ENCODE measurements at regions of chr1 and their contacts with region 1.

Region 1: DNA sequence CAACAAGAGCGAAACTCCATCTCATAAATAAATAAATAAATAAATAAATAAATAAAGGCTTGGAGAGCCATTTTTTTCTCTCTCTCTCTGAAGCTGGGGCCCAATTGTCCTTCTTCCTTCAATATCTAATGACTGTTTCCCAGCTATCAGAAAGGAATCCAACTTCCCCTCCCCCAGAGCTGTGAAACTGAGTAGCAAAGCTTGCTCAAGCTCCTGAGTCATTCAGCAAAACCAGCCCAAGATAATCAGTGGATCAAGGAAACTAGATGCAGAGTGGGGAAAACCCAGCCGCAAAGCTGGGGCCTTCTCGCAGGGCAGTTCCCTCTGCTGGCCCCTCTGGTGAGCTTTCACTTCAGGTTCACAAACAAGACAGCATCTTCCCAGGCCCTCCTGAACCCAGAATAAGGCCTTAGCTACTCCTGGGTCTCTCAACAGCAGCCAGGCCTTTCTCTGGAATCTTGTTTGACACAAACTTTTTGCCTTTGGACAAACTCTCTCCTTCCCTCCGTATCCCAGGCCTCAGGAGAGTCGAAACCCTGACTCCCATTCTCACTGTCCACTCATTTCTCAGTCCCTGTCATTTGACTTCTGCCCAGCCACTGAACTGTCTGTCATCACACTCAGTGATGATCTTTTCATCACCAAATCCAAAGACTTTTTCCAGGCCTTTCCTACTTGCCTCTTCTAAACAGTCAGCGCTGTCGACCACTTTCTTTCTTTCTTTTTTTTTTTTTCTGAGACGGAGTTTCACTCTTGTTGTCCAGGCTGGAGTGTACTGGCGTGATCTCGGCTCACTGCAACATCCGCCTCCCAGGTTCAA is 18.0 kb upstream of the PTP4A2 start:
- DNase-seq: peak; percentile 87 to 91
- ATAC-seq: peak; percentile 89
- H3K4me3 ChIP-seq: no peak overlapping the region
- H3K27ac ChIP-seq: peak overlapping the region; percentile 85 to 93
- H3K4me1 ChIP-seq: peaks cover 2 to 5% of the 10 kb centered on the region in 2 donors
- H3K27me3 ChIP-seq: no peaks in the 10 kb centered on the region

Region 2: GRCh38 chr1:31605908-31606427 is 350.2 kb before region 1 on chr1:
- intact Hi-C with region 1: no loop called
- DNase-seq: no peak
- ATAC-seq: no peak
- H3K4me3 ChIP-seq: no peak overlapping the region
- H3K27ac ChIP-seq: no peak overlapping the region
- H3K4me1 ChIP-seq: no peaks in the 10 kb centered on the region
- H3K27me3 ChIP-seq: no peaks in the 10 kb centered on the region

Region 3: DNA sequence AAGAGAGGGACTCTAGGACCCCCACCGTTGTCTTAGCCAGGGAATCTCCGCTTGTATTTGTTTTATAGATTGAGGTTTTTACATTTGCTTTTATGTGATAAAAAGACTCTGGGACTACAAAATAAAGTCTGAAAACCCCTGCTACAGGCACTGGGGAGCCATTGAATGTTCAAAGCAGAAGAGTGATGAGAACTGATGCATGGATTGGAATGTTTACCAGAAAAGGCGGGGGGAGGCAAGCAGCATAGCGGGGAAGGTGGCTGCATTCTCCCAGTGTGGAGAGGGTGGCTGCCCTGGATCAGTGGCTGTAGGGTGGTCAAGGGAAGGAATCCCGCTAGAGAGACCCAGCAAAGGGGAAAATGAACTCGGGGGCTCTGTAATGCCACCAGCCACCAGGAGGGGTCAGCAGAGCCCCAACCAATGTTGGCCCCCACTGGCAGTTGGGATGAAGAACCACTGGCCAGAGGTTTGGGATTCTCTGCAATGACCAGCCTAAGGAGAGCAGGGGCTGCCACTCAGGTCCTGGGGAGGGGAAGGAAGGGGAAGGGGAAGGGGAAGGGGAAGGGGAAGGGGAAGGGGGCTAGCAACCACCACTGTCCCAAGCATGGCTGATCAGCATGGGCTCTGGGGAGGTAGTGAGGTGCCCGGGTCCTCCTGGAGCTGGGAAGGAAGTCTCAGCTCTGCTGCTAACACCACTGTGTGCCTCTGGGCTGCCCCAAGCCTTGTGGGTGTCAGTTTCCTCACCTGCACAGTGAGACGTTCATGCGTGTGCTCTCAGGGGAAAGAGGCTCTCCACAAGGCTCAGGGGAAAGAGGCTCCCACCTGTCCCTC is 292.3 kb before region 1 on chr1:
- intact Hi-C with region 1: loop called in 1 of 2 experiments (anchors 10 kb)
- DNase-seq: no peak
- ATAC-seq: peak; percentile 78
- H3K4me3 ChIP-seq: no peak overlapping the region
- H3K27ac ChIP-seq: no peak overlapping the region
- H3K4me1 ChIP-seq: no peaks in the 10 kb centered on the region
- H3K27me3 ChIP-seq: no peaks in the 10 kb centered on the region

Region 4: DNA sequence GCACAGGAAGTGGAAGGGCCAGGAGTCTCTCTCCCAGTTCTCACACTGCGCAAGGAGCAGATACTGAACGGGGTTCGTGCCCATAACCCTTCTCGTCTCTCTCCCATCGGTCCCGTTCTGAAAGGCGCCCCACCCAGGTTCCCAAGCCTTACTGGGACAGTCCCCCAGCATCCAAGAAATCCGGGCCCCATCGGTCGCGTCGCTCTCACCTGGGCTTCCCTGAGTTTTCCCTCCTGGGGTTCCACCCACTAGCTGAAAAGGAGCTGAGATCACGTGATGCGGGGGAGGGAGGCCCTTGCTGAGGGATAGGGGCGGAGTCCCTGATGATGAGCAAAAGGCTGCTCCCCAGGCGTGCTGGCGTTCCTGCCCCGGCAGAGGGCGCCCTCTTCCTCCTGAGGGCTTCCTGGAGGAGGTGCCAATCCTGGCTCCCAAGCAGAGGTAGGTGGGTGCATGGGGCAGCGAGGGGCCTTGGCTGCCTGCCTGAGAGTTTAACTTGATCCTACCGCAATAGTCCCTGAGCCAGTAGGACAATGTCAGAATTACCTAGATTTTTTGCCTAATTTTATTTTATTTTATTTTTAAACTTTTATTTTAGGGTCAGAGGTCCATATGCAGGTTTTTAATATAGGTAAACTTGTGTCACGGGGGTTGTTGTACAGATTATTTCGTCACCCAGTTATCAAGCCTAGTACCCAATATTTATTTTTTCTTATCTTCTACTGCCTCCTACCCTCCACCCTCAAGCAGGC is 140.2 kb before region 1 on chr1 and contains the start of gene SPOCD1:
- intact Hi-C with region 1: loop called (anchors 5 kb)
- DNase-seq: peak; percentile 82 to 90
- ATAC-seq: peak; percentile 80
- H3K4me3 ChIP-seq: no peak within 1 kb of the TSS
- H3K27ac ChIP-seq: no peak within 1 kb of the TSS
- H3K4me1 ChIP-seq: no peaks in the 10 kb centered on the region
- H3K27me3 ChIP-seq: no peaks in the 10 kb centered on the region
- total RNA-seq, gene SPOCD1: 4.0 to 9.0 TPM

Region 5: GRCh38 chr1:31926853-31927660 is 29.1 kb before region 1 on chr1:
- intact Hi-C with region 1: loop called (anchors 5 kb)
- DNase-seq: no peak
- ATAC-seq: no peak
- H3K4me3 ChIP-seq: no peak overlapping the region
- H3K27ac ChIP-seq: no peak overlapping the region
- H3K4me1 ChIP-seq: peaks cover 2 to 6% of the 10 kb centered on the region in 2 donors
- H3K27me3 ChIP-seq: no peaks in the 10 kb centered on the region

Region 6: GRCh38 chr1:31938174-31938950 is 17.8 kb before region 1 on chr1 and contains the start of gene PTP4A2:
- intact Hi-C with region 1: loop called in 1 of 2 experiments (anchors 2 kb)
- DNase-seq: peak; percentile 96
- ATAC-seq: peak; percentile 97
- H3K4me3 ChIP-seq: peak within 1 kb of the TSS; percentile 79 to 90
- H3K27ac ChIP-seq: peak within 1 kb of the TSS; percentile 88 to 89
- H3K4me1 ChIP-seq: peaks cover 0 to 2% of the 10 kb centered on the region in 2 donors
- H3K27me3 ChIP-seq: no peaks in the 10 kb centered on the region
- total RNA-seq, gene PTP4A2: 230 to 244 TPM

Measured in aorta (tissue), 5 donors.